CD4-positive, alpha-beta T cell (primary cell): ENCODE measurements at regions of chr5 and their contacts with region 1.

Region 1: DNA sequence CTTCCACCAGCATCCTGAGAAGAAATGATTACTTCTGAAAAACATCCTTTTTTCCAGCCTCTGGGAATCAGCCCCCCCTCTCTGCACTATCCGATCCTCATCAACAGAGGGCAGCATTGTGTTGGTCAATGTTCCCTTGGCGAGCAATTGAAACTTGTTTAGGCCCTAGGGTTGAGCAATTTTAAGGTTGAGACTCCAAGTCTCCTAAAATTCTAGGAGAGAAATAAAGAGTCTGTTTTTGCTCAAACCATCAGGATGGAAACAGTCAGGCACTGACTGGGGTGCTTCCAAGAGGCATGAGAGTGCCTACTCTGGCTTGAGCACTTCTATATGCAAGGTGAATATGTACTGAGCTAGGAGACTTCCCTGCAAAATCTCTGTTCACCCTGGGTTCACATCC is 12.4 kb upstream of the CYFIP2 start:
- DNase-seq: peak in 2 of 14 experiments; percentile 30 to 66
- ATAC-seq: no peak
- H3K4me3 ChIP-seq: no peak overlapping the region
- H3K4me3 Mint-ChIP-seq: peak overlapping the region; percentile 74
- H3K27ac ChIP-seq: peak overlapping the region; percentile 46 to 73
- H3K27ac Mint-ChIP-seq: peak overlapping the region; percentile 91
- H3K4me1 ChIP-seq: peaks cover 76% of the 10 kb centered on the region
- H3K4me1 Mint-ChIP-seq: peaks cover 97% of the 10 kb centered on the region
- H3K27me3 ChIP-seq: no peaks in the 10 kb centered on the region
- H3K27me3 Mint-ChIP-seq: no peaks in the 10 kb centered on the region
- CTCF ChIP-seq: peak; percentile 73

Region 2: DNA sequence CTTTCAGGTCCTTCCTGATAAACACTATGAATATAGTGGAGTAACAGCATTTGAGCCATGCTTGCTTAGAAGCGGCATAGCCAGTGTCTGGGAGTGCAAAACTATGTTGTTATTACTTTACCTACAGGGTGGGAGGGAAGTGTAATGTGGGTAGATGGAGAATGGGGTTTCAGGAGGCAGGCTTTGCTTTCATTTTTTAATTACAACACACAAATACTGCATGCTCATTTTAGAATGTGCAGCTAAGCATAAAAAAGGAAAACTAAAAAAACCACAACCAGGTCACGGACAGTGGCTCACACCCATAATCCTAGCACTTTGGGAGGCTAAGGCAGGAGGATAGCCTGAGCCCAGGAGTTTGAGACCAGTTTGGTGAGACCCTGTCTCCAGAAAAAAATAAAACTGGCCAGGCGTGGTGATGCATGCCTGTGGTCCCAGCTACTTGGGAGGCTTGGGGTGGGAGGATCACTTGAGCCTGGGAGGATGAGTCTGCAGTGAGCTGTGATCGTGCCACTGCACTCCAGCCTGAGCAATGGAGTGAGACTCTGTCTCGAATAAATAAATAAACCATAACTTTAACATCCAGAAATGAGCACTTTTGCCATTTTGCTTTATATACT is 214.9 kb before region 1 on chr5:
- CTCF ChIA-PET with region 1: no interaction called
- POLR2A ChIA-PET with region 1: no interaction called
- intact Hi-C with region 1: no loop called
- DNase-seq: peak in 1 of 14 experiments; percentile 11
- ATAC-seq: no peak
- H3K4me3 ChIP-seq: no peak overlapping the region
- H3K4me3 Mint-ChIP-seq: no peak overlapping the region
- H3K27ac ChIP-seq: no peak overlapping the region
- H3K27ac Mint-ChIP-seq: no peak overlapping the region
- H3K4me1 ChIP-seq: peaks cover 9% of the 10 kb centered on the region
- H3K4me1 Mint-ChIP-seq: peaks cover 14% of the 10 kb centered on the region
- H3K27me3 ChIP-seq: no peaks in the 10 kb centered on the region
- H3K27me3 Mint-ChIP-seq: no peaks in the 10 kb centered on the region
- CTCF ChIP-seq: no peak

Region 3: GRCh38 chr5:157180374-157181264 is 72.9 kb before region 1 on chr5 and contains the start of gene ITK:
- CTCF ChIA-PET with region 1: no interaction called
- POLR2A ChIA-PET with region 1: interaction called, 4 read pairs
- intact Hi-C with region 1: loop called in 1 of 2 experiments (anchors 5 kb)
- DNase-seq: peak in 8 of 14 experiments; percentile 29 to 92 (median 53)
- ATAC-seq: peak; percentile 76
- H3K4me3 ChIP-seq: peak within 1 kb of the TSS; percentile 85
- H3K4me3 Mint-ChIP-seq: peak within 1 kb of the TSS; percentile 98
- H3K27ac ChIP-seq: peak within 1 kb of the TSS; percentile 69 to 74
- H3K27ac Mint-ChIP-seq: peak within 1 kb of the TSS; percentile 96
- H3K4me1 ChIP-seq: peaks cover 38% of the 10 kb centered on the region
- H3K4me1 Mint-ChIP-seq: peaks cover 57% of the 10 kb centered on the region
- H3K27me3 ChIP-seq: no peaks in the 10 kb centered on the region
- H3K27me3 Mint-ChIP-seq: no peaks in the 10 kb centered on the region
- CTCF ChIP-seq: no peak
- total RNA-seq, gene ITK: 289 to 292 TPM

Region 4: DNA sequence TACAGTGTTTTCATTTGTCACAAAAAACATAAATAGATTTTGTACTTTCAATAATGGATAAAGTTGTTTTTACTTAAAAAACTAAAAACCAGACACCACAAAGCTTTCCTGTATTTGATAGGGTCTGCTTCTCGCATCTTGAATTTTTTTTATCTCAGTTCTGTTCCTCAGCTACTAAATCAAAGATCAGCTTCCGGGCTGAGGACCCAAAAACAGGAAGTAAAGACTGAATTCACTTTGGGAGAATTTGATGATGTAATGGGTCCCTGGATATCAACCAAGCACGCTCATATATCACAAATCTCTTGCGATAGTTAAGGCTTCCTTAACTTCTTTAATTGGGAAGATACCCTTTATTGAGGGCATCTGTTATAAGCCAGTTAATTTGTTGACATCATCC is 48.8 kb before region 1 on chr5:
- CTCF ChIA-PET with region 1: interaction called, 4 read pairs
- POLR2A ChIA-PET with region 1: interaction called, 12 read pairs
- intact Hi-C with region 1: no loop called
- DNase-seq: peak in 4 of 14 experiments; percentile 46 to 80 (median 77)
- ATAC-seq: peak; percentile 56
- H3K4me3 ChIP-seq: no peak overlapping the region
- H3K4me3 Mint-ChIP-seq: peak overlapping the region; percentile 72
- H3K27ac ChIP-seq: peak overlapping the region; percentile 73 to 83
- H3K27ac Mint-ChIP-seq: peak overlapping the region; percentile 96
- H3K4me1 ChIP-seq: peaks cover 86% of the 10 kb centered on the region
- H3K4me1 Mint-ChIP-seq: peaks cover 92% of the 10 kb centered on the region
- H3K27me3 ChIP-seq: no peaks in the 10 kb centered on the region
- H3K27me3 Mint-ChIP-seq: no peaks in the 10 kb centered on the region
- CTCF ChIP-seq: no peak

Region 5: DNA sequence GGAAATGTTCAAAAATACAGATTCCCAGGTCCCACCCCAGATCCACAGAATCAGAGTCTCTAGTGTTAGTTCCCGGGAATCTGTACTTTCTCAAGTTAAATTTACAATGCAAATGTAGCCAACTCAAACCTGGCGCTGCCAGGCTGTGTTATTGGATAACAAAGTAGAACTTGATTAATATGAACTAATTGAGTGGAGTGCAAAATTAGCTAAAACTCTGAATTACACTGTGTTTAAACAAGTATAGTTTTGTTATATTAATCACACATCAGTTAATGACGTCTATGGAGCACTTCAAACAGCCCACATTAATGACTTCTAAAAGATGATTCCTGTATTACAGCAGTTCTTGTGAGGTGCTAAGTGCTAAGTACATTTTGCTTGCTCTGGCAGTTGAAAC is 20.0 kb before region 1 on chr5:
- CTCF ChIA-PET with region 1: interaction called, 3 read pairs
- POLR2A ChIA-PET with region 1: interaction called, 5 read pairs
- intact Hi-C with region 1: loop called in 1 of 2 experiments (anchors 2 kb)
- DNase-seq: peak in 4 of 14 experiments; percentile 32 to 87 (median 77)
- ATAC-seq: peak; percentile 93
- H3K4me3 ChIP-seq: no peak overlapping the region
- H3K4me3 Mint-ChIP-seq: no peak overlapping the region
- H3K27ac ChIP-seq: peak overlapping the region in 1 of 2 donors; percentile 28
- H3K27ac Mint-ChIP-seq: peak overlapping the region; percentile 79
- H3K4me1 ChIP-seq: peaks cover 27% of the 10 kb centered on the region
- H3K4me1 Mint-ChIP-seq: peaks cover 64% of the 10 kb centered on the region
- H3K27me3 ChIP-seq: no peaks in the 10 kb centered on the region
- H3K27me3 Mint-ChIP-seq: no peaks in the 10 kb centered on the region
- CTCF ChIP-seq: no peak

Region 6: DNA sequence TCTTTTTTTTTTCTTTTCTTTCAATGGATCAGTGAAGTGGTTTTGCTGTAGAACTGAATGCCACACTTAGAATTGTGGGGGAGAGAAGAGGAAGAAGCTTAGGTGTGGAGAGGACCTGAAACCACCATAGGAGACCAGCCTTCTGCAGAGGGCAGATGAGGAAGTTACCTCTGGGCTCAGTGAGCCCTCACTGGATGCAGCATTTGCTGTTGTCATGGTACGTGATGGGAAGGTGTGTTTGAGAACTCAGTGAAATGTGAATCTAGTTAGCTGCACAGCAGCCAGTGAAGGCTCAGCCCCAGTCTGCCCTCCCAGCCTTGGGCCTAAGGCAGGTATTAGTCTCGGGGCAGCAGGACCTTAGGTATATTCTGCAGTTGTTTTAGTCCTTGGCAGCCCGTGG is 29.9 kb after region 1 on chr5:
- CTCF ChIA-PET with region 1: no interaction called
- POLR2A ChIA-PET with region 1: interaction called, 6 read pairs
- intact Hi-C with region 1: loop called in 1 of 2 experiments (anchors 5 kb)
- DNase-seq: peak in 5 of 14 experiments; percentile 14 to 54 (median 52)
- ATAC-seq: peak; percentile 86
- H3K4me3 ChIP-seq: no peak overlapping the region
- H3K4me3 Mint-ChIP-seq: peak overlapping the region; percentile 52
- H3K27ac ChIP-seq: peak overlapping the region in 1 of 2 donors; percentile 24
- H3K27ac Mint-ChIP-seq: peak overlapping the region; percentile 83
- H3K4me1 ChIP-seq: peaks cover 66% of the 10 kb centered on the region
- H3K4me1 Mint-ChIP-seq: peaks cover 90% of the 10 kb centered on the region
- H3K27me3 ChIP-seq: no peaks in the 10 kb centered on the region
- H3K27me3 Mint-ChIP-seq: no peaks in the 10 kb centered on the region
- CTCF ChIP-seq: no peak

Region 7: DNA sequence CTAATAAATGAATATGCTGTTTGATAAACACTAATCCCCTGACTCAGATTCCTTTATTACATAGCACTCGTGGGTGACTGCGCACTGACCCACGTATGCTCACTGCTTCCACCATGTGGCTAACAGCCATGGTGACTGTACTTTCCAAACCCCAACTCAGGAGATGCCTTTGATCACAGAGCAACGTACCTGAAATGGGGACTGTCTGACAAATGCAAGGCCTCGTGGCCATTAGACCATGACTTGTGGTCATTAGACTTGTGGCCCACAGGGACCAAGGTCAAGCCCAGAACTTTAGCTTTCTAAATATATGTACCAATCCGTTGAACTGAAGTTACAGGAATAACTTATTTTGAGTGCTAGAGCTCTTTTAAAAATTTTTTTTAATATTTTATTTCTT is 58.9 kb after region 1 on chr5:
- CTCF ChIA-PET with region 1: interaction called, 4 read pairs
- POLR2A ChIA-PET with region 1: interaction called, 15 read pairs
- intact Hi-C with region 1: loop called (anchors 1 kb)
- DNase-seq: peak; percentile 41 to 88 (median 56)
- ATAC-seq: peak; percentile 92
- H3K4me3 ChIP-seq: no peak overlapping the region
- H3K4me3 Mint-ChIP-seq: peak overlapping the region; percentile 40
- H3K27ac ChIP-seq: no peak overlapping the region
- H3K27ac Mint-ChIP-seq: peak overlapping the region; percentile 73
- H3K4me1 ChIP-seq: peaks cover 46% of the 10 kb centered on the region
- H3K4me1 Mint-ChIP-seq: peaks cover 48% of the 10 kb centered on the region
- H3K27me3 ChIP-seq: no peaks in the 10 kb centered on the region
- H3K27me3 Mint-ChIP-seq: no peaks in the 10 kb centered on the region
- CTCF ChIP-seq: peak; percentile 76